Activated CD8-positive, alpha-beta T cell treated with anti-CD3 and anti-CD28 coated beads for 36 hours (primary cell): ENCODE measurements at regions of chr6 and their contacts with region 1.

Region 1: DNA sequence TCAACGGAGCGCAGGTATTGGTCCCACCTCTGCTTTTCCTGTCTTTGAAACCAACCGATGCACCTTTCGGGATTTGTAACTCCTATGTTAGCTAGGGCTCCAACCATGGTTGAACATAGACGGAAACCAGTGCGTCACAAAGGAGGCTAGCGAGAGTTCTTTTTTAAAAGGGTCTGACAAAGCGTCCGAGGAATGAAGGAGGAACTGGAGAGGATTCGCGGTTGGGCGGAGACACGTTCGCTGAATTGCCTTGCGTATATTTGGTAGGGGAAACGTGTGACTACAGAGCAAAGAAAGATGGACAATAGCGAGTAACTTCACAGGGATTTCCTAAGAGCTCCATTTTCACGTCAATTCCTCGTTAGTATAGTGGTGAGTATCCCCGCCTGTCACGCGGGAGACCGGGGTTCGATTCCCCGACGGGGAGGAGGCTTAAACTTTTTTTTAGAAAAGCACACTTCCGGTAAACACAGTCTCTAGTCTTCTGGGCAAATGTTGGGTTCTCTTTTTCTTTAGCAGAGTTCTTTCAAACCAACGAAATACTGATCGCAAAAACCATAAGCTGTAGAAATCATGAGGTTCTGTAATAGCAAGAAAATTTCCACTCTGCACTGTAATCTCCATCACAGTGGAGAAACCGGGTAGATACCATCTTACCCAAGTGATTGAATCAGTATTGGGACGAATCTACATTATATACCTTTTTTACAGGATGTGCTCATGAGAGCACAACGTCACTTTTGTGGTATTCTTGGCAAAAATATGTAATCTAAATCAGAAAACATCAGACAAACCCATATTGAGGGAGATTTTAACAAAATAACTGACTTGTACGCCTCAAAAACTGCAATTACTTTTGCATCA is 6.6 kb upstream of the ZNF184 start:
- DNase-seq: peak; percentile 86
- ATAC-seq: peak; percentile 57
- H3K4me3 Mint-ChIP-seq: no peak overlapping the region
- H3K27ac Mint-ChIP-seq: no peak overlapping the region
- H3K4me1 Mint-ChIP-seq: peaks cover 6% of the 10 kb centered on the region
- H3K27me3 Mint-ChIP-seq: no peaks in the 10 kb centered on the region
- CTCF ChIP-seq: no peak

Region 2: GRCh38 chr6:27388293-27389197 is 91.0 kb before region 1 on chr6 and contains the start of gene ZNF391:
- CTCF ChIA-PET with region 1: no interaction called
- POLR2A ChIA-PET with region 1: no interaction called
- intact Hi-C with region 1: loop called (anchors 5 kb)
- DNase-seq: peak; percentile 77
- ATAC-seq: peak; percentile 91
- H3K4me3 Mint-ChIP-seq: peak within 1 kb of the TSS; percentile 94
- H3K27ac Mint-ChIP-seq: peak within 1 kb of the TSS; percentile 92
- H3K4me1 Mint-ChIP-seq: peaks cover 13% of the 10 kb centered on the region
- H3K27me3 Mint-ChIP-seq: no peaks in the 10 kb centered on the region
- CTCF ChIP-seq: no peak
- total RNA-seq, gene ZNF391: 2.8 to 4.5 TPM

Region 3: GRCh38 chr6:27426045-27426620 is 53.4 kb before region 1 on chr6:
- CTCF ChIA-PET with region 1: no interaction called
- POLR2A ChIA-PET with region 1: no interaction called
- intact Hi-C with region 1: no loop called
- DNase-seq: no peak
- ATAC-seq: no peak
- H3K4me3 Mint-ChIP-seq: no peak overlapping the region
- H3K27ac Mint-ChIP-seq: no peak overlapping the region
- H3K4me1 Mint-ChIP-seq: no peaks in the 10 kb centered on the region
- H3K27me3 Mint-ChIP-seq: peaks cover 14% of the 10 kb centered on the region
- CTCF ChIP-seq: no peak